BJ (cell line): ENCODE measurements at regions of chr1 and their contacts with region 1.

Region 1: GRCh38 chr1:24830680-24831272 is 85.5 kb downstream of the CLIC4 start:
- DNase-seq: peak; percentile 20
- H3K4me3 ChIP-seq: no peak overlapping the region
- H3K27me3 ChIP-seq: no peaks in the 10 kb centered on the region
- CTCF ChIP-seq: peak; percentile 69

Region 2: DNA sequence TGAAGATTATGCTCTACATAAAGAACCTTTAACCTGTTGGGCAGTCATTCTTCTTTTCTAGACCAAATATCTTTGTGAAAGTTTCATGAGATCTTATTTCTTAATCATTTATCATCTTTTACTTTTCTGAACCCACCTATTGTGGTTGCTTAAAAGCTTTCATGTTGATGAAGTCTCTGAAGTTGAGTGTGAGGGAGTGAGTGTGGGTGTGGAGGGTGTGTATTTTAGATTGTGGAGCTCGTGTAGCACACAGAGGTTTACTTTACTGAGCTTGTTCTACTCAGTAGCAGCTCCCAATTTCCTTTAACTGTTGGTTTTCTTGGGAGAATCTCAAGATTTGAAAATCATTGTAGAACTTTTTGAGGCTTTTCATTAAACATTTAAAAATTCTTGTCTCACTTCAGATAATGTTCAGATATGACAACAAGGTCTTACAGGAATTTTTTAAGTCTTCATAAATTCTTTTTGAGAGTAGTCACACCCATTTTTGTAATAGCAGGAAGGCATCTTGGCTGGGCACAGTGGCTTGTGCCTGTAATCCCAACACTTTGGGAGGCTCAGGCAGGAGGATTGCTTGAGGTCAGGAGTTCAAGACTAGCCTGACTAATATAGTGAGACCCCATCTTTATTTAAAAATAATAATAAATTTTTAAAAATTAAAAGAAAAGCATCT is 170.6 kb before region 1 on chr1:
- CTCF ChIA-PET with region 1: interaction called, 12 read pairs
- POLR2A ChIA-PET with region 1: no interaction called
- DNase-seq: no peak
- H3K4me3 ChIP-seq: no peak overlapping the region
- H3K27me3 ChIP-seq: no peaks in the 10 kb centered on the region
- CTCF ChIP-seq: no peak

Region 3: DNA sequence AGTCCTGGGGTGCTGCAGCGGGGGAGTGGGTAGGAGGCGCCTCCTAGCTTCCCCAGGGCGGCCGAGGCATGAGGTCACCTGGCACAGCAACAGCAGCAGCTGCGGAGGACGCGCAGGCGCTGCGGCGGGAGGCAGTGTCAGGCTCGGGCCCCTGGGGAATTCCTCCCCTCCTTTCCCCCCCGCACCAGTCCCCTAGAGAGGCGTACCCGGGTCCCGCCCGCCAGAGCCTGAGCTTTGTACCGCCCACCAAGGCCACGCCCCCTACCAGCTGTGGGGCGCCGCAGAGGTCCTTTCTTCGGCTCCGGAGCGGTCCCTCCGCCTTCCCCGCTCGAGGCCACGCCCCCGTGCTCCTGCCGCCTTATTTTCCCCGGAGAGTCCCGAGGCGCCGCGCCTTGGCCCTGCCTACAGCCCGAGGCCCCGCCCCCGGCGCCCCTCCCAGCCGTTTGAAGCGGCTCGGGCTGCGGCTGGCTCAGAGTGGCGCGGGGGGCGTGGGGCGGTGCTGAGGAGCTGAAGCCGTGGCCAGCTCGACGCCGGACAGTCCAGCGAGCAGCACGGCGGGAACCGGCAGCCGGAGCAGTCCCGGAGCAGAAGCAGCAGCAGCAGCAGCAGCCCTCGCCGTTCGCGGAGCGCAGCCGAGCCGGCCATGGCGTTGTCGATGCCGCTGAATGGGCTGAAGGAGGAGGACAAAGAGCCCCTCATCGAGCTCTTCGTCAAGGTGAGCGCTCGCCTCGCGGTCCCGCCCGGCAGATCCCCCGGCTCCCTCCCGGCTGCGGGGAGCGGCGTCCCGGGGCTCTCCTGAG is 85.7 kb before region 1 on chr1 and contains the start of gene CLIC4:
- CTCF ChIA-PET with region 1: interaction called, 28 read pairs
- POLR2A ChIA-PET with region 1: interaction called, 5 read pairs
- DNase-seq: peak; percentile 94
- H3K4me3 ChIP-seq: peak within 1 kb of the TSS; percentile 92
- H3K27me3 ChIP-seq: no peaks in the 10 kb centered on the region
- CTCF ChIP-seq: peak; percentile 47
- polyA plus RNA-seq, gene CLIC4: 275 and 547 TPM in 2 replicates

Region 4: GRCh38 chr1:24841593-24841992 is 10.8 kb after region 1 on chr1:
- CTCF ChIA-PET with region 1: interaction called, 34 read pairs
- POLR2A ChIA-PET with region 1: interaction called, 3 read pairs
- DNase-seq: no peak
- H3K4me3 ChIP-seq: no peak overlapping the region
- H3K27me3 ChIP-seq: no peaks in the 10 kb centered on the region
- CTCF ChIP-seq: no peak

Region 5: GRCh38 chr1:24878775-24879742 is 48.3 kb after region 1 on chr1:
- CTCF ChIA-PET with region 1: no interaction called
- POLR2A ChIA-PET with region 1: no interaction called
- DNase-seq: peak; percentile 15
- H3K4me3 ChIP-seq: no peak overlapping the region
- H3K27me3 ChIP-seq: peaks cover 10% of the 10 kb centered on the region
- CTCF ChIP-seq: no peak

Region 6: DNA sequence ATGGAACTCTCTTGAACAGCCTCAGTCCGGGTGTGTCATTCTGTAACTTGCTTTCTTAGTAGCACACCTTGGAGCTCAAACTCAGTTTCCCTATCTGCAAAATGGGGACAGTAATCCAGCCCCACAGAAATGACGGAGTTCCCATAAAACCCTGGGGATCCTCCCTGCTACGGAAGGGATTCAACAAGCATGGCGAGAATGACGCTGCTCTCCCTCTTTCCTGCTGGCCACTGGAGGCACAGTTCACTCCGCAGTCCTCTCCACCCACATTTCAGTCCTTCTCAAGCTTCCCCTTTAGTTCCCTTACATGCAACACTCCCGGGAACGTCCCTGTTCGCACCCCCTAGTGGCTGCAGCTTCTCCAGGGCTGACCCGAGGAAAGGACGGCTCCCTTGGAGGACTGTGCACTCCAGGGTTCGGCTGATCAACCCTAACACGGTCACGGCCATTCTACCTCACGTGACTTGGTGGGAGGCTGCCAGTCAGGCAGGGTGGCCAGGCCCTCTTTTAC is 78.7 kb after region 1 on chr1:
- CTCF ChIA-PET with region 1: no interaction called
- POLR2A ChIA-PET with region 1: no interaction called
- DNase-seq: no peak
- H3K4me3 ChIP-seq: no peak overlapping the region
- H3K27me3 ChIP-seq: no peaks in the 10 kb centered on the region
- CTCF ChIP-seq: peak; percentile 54

Region 7: DNA sequence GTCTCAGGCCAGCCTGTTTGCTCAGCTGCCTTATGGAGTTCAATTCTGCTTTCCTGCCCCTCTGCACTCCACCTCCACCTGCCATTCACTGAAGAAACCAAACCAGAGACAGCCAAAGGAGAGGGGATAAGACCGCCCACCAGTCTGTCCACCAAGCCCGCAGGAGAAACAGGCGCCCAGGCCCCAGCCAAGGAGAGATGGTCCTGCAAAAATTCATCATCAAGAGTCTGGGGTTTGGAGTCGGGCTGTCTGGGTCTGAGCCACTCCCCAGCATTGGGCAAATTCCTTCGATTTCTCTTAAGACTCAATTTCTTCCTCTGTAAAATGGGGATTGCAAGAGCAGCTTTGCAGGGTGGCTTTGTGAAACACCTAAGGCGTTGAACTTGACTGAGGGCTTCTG is 220.7 kb after region 1 on chr1:
- CTCF ChIA-PET with region 1: no interaction called
- POLR2A ChIA-PET with region 1: no interaction called
- DNase-seq: no peak
- H3K4me3 ChIP-seq: no peak overlapping the region
- H3K27me3 ChIP-seq: peaks cover 16% of the 10 kb centered on the region
- CTCF ChIP-seq: no peak